ENCODE measurements at regions of chr1 and their contacts with region 1.

Region 1: DNA sequence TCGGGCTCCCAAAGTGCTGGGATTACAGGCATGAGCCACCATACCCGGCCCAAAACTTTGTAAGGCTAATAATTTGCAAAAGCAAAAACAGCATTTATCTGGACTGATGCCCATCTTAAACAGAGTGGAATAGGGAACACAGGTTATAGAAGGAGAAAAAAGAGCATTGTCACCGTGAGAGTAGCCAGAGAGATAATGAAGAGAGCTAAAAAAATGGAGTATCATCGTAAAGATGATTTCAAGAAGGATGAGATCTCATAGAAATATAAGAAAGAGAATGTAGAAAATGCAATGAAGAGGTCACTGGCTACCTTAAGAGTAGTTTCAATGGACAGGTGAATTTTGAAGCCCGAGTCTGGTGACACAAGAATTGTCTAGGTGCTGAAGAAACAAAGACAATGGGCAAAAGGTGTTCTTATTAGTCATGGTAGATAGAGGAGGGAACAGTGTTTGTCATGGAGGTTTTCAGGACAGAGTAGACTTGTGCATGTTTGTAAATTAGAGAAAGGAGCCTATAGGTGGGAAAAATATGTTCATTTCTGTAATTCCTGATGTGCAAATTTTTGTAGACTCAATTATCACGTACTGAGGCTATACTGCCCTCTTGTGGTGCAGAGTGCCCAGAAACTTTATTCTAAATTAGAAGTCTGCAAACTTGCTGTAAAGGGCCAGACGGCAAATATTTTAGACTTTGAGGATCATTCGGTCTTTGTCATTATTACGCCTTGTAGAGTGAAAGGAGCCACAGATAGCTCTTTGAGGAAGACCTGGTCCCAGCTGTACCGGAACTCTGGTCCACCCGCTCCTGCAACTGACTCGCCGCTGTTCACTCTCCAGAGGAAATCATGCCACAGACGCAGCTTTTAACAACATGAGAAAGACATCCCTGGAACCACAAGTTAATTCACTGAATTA is 8.1 kb upstream of the TMEM183A start:
- DNase-seq: peak; percentile 40
- ATAC-seq: peak; percentile 78
- H3K4me3 ChIP-seq: 0 out of 2 replicates have a peak overlapping the region, but pooled peaks have one; percentile 20
- H3K27ac ChIP-seq: no peak overlapping the region
- H3K4me1 ChIP-seq: peaks cover 6% of the 10 kb centered on the region; the same call in 1 of the 2 replicates
- H3K27me3 ChIP-seq: no peaks in the 10 kb centered on the region
- CTCF ChIP-seq: peak; percentile 70 to 80 (median 73); a peak in 5 of 6 replicates
- EP300 ChIP-seq: no peak
- POLR2A ChIP-seq: no peak
- RAD21 ChIP-seq: peak; percentile 78

Region 2: GRCh38 chr1:202728951-202729350 is 270.1 kb before region 1 on chr1:
- CTCF ChIA-PET with region 1: interaction called, 3 read pairs
- POLR2A ChIA-PET with region 1: no interaction called
- RAD21 ChIA-PET with region 1: no interaction called
- SMC1A ChIA-PET with region 1: no interaction called
- in situ Hi-C with region 1: no loop called
- intact Hi-C with region 1: loop called (anchors 10 kb)
- DNase-seq: no peak
- ATAC-seq: peak; percentile 60
- H3K4me3 ChIP-seq: no peak overlapping the region
- H3K27ac ChIP-seq: no peak overlapping the region
- H3K4me1 ChIP-seq: no peaks in the 10 kb centered on the region
- H3K27me3 ChIP-seq: no peaks in the 10 kb centered on the region
- CTCF ChIP-seq: no peak
- EP300 ChIP-seq: no peak
- POLR2A ChIP-seq: no peak
- RAD21 ChIP-seq: no peak

Region 3: DNA sequence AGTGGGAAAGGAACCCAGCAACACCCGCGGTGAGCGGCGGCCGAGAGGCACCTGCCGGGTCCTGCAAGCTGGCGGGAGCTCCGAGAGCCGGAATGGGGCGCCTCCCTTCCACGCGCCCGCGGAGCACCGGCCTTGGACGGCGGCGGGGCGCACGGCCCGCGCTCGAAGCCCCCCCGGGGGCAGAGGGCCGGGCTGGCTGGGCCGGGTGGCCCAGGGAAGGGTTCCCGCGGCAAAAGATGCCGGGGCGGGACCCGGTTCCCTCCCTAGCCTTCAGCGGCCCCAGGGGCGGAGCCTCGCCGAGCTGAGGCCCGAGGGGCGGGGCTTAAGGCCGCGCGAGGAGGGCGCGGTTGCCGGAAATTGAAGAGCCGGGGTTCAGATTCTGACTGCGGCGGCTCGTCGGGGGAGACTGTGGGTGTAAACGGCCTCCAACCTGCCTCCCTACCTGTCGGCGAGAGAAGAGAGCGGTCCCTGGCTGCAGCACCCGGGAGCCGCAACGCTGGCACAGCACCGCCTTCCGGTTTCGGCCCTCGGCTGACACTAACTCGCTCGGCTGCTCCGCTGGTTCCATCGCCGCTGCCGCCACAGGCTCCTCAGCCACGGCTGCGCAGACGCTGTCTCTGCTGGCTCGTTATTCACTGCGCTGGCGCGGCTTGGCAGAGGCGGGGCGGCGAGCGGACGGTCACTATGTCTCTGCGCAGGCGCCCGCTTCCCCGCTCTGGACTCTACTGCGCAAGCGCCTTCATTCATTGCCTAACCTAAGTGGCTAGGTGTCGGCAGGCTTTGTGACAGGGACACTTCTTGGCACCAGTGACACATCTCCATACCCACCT is 110.3 kb before region 1 on chr1 and contains the start of gene RABIF:
- CTCF ChIA-PET with region 1: interaction called, 3 read pairs
- POLR2A ChIA-PET with region 1: interaction called, 3 read pairs
- RAD21 ChIA-PET with region 1: no interaction called
- SMC1A ChIA-PET with region 1: interaction called, 4 read pairs
- in situ Hi-C with region 1: no loop called
- intact Hi-C with region 1: loop called (anchors 5 kb)
- DNase-seq: peak; percentile 88
- ATAC-seq: peak; percentile 97
- H3K4me3 ChIP-seq: peak within 1 kb of the TSS; percentile 79
- H3K27ac ChIP-seq: peak within 1 kb of the TSS; percentile 84
- H3K4me1 ChIP-seq: peaks cover 3% of the 10 kb centered on the region; the same call in 1 of the 2 replicates
- H3K27me3 ChIP-seq: no peaks in the 10 kb centered on the region
- CTCF ChIP-seq: peak in 2 of 3 experiments; percentile 16 to 22; a peak in 2 of 6 replicates
- EP300 ChIP-seq: no peak
- POLR2A ChIP-seq: peak; percentile 97
- RAD21 ChIP-seq: no peak
- polyA plus RNA-seq, gene RABIF: 4.7 to 6.3 TPM

Region 4: DNA sequence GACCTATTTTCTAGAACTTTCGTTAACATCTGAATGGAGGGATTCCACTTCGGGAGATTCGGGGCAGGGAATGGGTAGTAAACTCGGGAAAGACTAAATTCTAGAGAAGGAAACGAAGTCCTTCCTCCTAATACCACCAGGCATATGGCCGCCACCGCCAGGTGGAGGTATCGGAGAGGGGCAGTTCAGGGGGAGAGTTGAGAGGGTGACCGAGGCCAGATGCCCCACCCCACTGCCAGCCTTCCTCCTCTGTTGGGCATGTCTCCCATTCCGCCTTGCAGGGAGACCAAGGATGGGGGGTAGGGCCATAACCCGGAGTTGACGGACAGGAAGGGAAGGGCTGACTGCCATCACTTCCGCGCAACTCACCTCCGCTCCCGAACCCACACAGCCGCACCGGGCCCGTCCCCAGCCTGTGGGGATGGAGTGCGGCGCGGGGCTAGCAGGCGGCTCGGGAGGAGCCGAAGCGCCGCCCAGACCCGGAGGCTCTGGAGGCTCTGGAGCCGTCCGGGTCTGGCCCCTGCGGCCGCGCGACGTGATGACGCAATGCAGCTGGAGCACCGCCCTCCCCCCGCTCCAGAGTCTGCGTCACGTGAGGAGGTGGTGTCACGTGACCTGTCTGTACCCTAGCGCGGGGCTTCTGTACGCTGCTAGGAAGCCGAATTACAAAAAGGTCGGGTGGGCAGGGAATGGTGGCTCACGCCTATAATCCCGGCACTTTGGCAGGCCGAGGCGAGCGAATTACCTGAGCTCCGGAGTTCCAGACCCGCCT is 72.2 kb before region 1 on chr1 and contains the start of gene KLHL12:
- CTCF ChIA-PET with region 1: interaction called, 10 read pairs
- POLR2A ChIA-PET with region 1: interaction called, 3 read pairs
- RAD21 ChIA-PET with region 1: interaction called, 3 read pairs
- SMC1A ChIA-PET with region 1: interaction called, 3 read pairs
- in situ Hi-C with region 1: no loop called
- intact Hi-C with region 1: loop called (anchors 2 kb)
- DNase-seq: peak; percentile 86
- ATAC-seq: peak; percentile 97
- H3K4me3 ChIP-seq: peak within 1 kb of the TSS; percentile 94
- H3K27ac ChIP-seq: peak within 1 kb of the TSS; percentile 82
- H3K4me1 ChIP-seq: no peaks in the 10 kb centered on the region; the same call in 1 of the 2 replicates
- H3K27me3 ChIP-seq: no peaks in the 10 kb centered on the region
- CTCF ChIP-seq: peak; percentile 58 to 70 (median 65)
- EP300 ChIP-seq: peak; percentile 30 to 74; a peak in 2 of 4 replicates
- POLR2A ChIP-seq: peak; percentile 97
- RAD21 ChIP-seq: peak; percentile 37; the same call in 1 of the 2 replicates
- polyA plus RNA-seq, gene KLHL12: 16.0 to 17.8 TPM

Region 5: DNA sequence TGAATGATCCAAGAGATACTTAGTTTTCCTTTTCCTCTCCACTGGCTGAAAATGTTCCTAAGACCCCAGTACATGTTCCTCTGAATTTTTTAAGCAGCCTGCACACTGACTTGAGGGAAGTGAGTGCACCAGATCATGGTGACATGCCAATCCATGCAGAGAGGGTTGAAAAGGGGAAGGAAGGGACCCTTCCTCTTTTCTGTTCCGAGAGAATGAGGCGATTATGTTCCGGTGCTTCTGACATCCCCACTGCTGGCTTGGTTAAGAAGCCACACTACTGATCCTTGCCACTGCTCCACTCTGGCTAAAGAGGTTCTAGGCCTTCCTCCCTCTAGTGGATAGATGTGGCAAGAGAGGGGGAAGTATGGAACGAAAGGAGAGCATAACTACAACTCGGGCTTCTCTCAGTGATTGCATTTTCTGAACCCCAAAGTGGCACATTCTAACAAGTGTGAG is 30.2 kb before region 1 on chr1:
- CTCF ChIA-PET with region 1: interaction called, 9 read pairs
- POLR2A ChIA-PET with region 1: no interaction called
- RAD21 ChIA-PET with region 1: no interaction called
- SMC1A ChIA-PET with region 1: interaction called, 7 read pairs
- in situ Hi-C with region 1: no loop called
- intact Hi-C with region 1: loop called (anchors 2 kb)
- DNase-seq: peak; percentile 33
- ATAC-seq: peak; percentile 78
- H3K4me3 ChIP-seq: 0 out of 2 replicates have a peak overlapping the region, but pooled peaks have one; percentile 13
- H3K27ac ChIP-seq: no peak overlapping the region
- H3K4me1 ChIP-seq: peaks cover 23% of the 10 kb centered on the region
- H3K27me3 ChIP-seq: peaks cover 0 to 2% of the 10 kb centered on the region in 2 experiments; a peak in 1 of 4 replicates
- CTCF ChIP-seq: peak; percentile 55 to 79 (median 71)
- EP300 ChIP-seq: no peak
- POLR2A ChIP-seq: no peak
- RAD21 ChIP-seq: peak; percentile 49; the same call in 1 of the 2 replicates

Region 6: GRCh38 chr1:202982715-202983430 is 16.2 kb before region 1 on chr1:
- CTCF ChIA-PET with region 1: interaction called, 11 read pairs
- POLR2A ChIA-PET with region 1: no interaction called
- RAD21 ChIA-PET with region 1: no interaction called
- SMC1A ChIA-PET with region 1: interaction called, 3 read pairs
- in situ Hi-C with region 1: no loop called
- intact Hi-C with region 1: no loop called
- DNase-seq: no peak
- ATAC-seq: no peak
- H3K4me3 ChIP-seq: no peak overlapping the region
- H3K27ac ChIP-seq: no peak overlapping the region
- H3K4me1 ChIP-seq: no peaks in the 10 kb centered on the region
- H3K27me3 ChIP-seq: no peaks in the 10 kb centered on the region
- CTCF ChIP-seq: no peak
- EP300 ChIP-seq: no peak
- POLR2A ChIP-seq: no peak
- RAD21 ChIP-seq: no peak

Region 7: DNA sequence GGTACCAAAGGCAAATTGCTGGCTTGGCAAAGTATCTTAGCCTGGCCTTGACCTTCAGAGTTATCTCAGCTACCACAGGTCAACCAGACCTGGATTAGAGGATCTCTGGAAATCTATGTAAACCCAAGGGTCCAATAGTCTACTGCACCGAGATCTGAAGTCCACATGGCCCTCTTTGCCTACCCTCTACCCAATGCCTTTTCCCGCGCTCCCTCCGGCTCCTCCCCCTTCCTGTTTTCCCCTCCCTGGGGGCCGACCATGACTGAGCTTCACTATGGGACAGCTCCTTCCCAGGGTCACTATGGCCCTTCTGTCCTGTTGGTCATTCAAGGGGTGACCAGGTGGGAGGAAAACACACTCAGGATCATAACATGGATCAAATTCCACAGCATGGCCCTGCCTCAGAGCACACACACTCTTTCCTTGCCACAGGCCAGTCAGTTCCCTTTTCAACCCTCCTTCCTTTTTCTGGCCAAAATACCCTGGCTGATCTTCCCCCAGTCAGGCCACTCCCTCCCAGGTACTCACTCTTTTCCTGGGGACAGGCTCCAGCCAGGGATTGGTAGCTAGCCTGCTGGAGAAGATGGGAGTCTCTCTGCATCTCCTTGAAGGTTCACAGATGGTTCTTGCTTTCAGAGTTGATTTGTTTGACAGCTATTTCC is 11.0 kb before region 1 on chr1:
- CTCF ChIA-PET with region 1: interaction called, 17 read pairs
- POLR2A ChIA-PET with region 1: no interaction called
- RAD21 ChIA-PET with region 1: interaction called, 3 read pairs
- SMC1A ChIA-PET with region 1: interaction called, 9 read pairs
- in situ Hi-C with region 1: no loop called
- intact Hi-C with region 1: no loop called
- DNase-seq: no peak
- ATAC-seq: no peak
- H3K4me3 ChIP-seq: no peak overlapping the region
- H3K27ac ChIP-seq: no peak overlapping the region
- H3K4me1 ChIP-seq: no peaks in the 10 kb centered on the region
- H3K27me3 ChIP-seq: no peaks in the 10 kb centered on the region; a peak in 1 of 4 replicates
- CTCF ChIP-seq: no peak
- EP300 ChIP-seq: no peak
- POLR2A ChIP-seq: no peak
- RAD21 ChIP-seq: no peak

Region 8: GRCh38 chr1:203046984-203047630 is 48.0 kb after region 1 on chr1:
- CTCF ChIA-PET with region 1: no interaction called
- POLR2A ChIA-PET with region 1: no interaction called
- RAD21 ChIA-PET with region 1: no interaction called
- SMC1A ChIA-PET with region 1: no interaction called
- in situ Hi-C with region 1: no loop called
- intact Hi-C with region 1: no loop called
- DNase-seq: no peak
- ATAC-seq: no peak
- H3K4me3 ChIP-seq: no peak overlapping the region
- H3K27ac ChIP-seq: no peak overlapping the region
- H3K4me1 ChIP-seq: no peaks in the 10 kb centered on the region
- H3K27me3 ChIP-seq: peaks cover 0 to 1% of the 10 kb centered on the region in 2 experiments; a peak in 1 of 4 replicates
- CTCF ChIP-seq: no peak
- EP300 ChIP-seq: no peak
- POLR2A ChIP-seq: no peak
- RAD21 ChIP-seq: no peak

Region 9: GRCh38 chr1:203273869-203274602 is 274.9 kb after region 1 on chr1:
- CTCF ChIA-PET with region 1: no interaction called
- POLR2A ChIA-PET with region 1: no interaction called
- RAD21 ChIA-PET with region 1: no interaction called
- SMC1A ChIA-PET with region 1: no interaction called
- in situ Hi-C with region 1: no loop called
- intact Hi-C with region 1: no loop called
- DNase-seq: no peak
- ATAC-seq: peak; percentile 49
- H3K4me3 ChIP-seq: peak overlapping the region; percentile 63
- H3K27ac ChIP-seq: peak overlapping the region; percentile 89
- H3K4me1 ChIP-seq: peaks cover 45% of the 10 kb centered on the region
- H3K27me3 ChIP-seq: no peaks in the 10 kb centered on the region
- CTCF ChIP-seq: no peak
- EP300 ChIP-seq: no peak
- POLR2A ChIP-seq: 0 out of 2 replicates have a peak, but pooled peaks have one; percentile 31
- RAD21 ChIP-seq: no peak

Measured in GM12878 (cell line).